Head of caudate nucleus (tissue), 42 donors: ENCODE measurements at regions of chr2 and their contacts with region 1.

Region 1: DNA sequence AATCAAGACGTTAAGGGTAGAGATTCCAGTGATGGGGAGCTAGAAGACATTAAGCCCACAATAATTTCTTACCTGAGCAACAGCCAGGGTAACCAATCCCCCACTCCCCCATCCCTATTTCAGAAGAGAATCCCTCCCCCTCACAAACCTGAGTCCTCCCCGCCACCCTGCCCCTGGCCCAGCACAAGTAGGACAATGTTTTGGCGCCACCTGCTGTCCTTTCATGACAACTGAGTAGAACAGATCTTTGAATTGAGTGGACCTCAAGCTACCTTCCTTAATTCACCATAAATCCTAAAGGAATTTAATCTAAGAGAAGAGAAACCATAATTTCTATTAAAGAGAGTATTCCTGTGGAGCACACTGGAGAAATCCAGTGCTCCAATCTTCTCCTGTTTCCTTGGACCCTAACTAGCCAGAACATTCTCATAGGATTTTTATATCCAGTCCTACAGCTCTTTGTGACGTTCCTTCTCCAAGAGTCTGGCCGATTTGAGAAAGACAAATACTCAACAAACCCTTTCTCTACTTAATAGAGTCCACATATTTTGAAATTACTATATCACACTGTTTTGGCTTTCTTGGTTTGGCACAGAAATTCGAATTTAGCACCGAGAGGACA is 41.1 kb downstream of the NHEJ1 start:
- DNase-seq: peak; percentile 47 to 92 (median 78)

Region 2: DNA sequence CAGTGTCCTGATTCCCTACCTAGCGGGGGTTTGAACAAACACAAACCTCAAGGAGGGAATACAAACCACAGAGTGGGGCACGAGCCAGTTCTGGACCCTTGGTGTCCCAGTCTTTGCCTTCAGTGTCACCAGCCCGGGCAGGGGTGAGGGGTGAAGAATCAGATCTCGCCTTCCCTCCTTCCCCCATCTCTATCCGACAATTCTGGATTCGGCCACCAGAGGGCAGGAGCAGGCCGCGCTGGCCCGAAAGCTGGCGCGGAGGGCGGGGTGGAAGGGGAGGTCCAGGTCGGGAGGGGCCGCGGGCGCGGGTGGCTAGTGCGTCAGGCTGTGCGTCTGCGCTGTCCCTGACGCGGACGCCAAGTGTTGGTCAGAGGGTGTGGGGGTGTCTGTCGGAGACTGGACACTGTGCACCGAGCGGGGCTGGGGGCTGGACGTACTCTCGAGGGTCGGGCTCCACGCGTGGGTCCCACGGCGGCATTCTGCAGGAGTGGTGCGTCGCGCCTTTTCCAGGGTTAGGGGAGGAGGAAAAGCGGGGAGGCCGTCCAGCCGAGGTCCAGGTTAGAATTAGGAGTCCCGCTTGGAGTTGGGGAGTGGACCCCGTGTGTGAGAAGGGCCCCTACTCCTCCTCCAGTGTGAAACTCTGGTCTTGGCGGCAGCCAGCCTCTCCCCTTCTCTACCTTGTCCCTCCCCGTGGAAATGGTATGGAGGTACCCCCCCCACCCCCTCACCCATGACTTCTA is 123.4 kb before region 1 on chr2:
- intact Hi-C with region 1: loop called (anchors 10 kb)
- DNase-seq: peak; percentile 67 to 96 (median 88)

Region 3: DNA sequence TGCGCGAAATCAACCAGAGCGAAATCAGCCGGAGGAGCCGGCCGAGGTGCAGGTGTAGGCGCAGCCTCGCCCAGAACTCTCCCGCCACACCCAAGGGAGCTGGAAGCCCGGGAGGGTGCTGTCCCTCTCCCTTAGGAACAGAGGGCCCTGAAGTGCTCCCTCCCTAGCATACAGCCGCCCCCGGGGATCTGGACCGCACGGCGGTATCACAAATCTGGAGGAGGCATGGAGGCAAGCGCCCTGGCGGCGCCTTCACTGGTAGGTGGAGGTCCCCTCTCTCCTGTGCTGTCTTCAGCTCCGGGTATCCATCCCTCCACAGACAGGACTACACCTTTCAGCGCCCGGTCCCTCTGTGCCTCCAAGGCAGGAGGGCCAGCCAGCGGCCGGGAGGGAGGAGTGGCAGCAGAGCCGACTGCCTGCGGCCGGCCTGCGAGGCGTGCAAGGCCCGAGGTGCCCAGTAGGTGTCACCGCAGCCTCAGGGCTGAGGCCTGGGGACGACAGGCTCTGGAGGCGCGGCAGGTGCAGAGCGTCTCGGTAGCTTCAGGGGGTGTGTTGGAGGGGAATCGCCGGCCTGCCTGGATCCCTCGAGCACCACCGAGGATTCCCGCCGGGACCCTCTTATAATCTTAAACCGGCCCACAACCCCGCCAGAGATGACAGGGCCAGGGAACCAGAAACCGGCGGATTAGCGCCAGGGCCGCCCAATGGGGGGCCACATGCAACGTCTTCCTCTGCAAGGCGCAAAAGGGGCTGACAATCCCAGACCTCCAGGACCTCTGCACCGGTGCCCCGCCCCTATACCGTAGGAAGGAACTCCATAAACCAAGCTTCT is 61.6 kb before region 1 on chr2:
- intact Hi-C with region 1: loop called (anchors 10 kb)
- DNase-seq: peak; percentile 52 to 91 (median 80)